GM10248 (cell line): ENCODE measurements at regions of chr2 and their contacts with region 1.

Region 1: GRCh38 chr2:26745609-26746327 is 18.3 kb upstream of the SLC35F6 start:
- DNase-seq: peak; percentile 79
- CTCF ChIP-seq: peak; percentile 95

Region 2: DNA sequence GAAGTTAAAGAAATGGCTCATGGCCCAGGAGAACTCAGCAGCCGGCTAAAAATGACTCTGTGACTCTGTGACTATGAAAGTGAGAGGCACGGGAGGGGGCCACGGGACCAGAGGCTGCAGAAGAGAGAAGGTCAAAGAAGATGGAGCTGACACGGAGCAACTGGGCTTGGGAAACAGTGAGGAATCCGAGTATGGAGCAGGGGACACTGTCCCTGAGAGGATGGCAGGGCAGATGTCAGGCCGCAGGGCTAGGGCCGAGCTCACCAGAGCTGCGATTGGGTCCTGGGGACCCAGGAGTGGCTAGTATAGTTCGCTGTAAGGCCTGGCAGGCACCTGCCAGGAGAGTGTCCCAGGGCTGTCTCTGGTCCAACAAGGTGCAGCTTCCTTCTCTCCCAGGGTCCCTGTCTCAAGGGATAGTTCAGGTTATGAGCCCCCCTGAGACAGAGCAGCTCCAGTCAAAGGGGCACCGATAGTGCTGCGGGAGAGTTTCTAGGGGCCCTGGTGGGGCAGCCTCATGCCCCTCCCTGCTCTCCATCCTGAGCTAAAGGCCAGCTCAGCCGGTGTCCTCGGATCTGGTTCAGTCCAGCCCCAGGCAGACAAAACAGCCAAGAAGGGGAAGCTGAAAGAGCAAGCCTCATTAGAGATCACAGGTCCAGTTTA is 147.3 kb before region 1 on chr2:
- CTCF ChIA-PET with region 1: interaction called, 189 read pairs
- POLR2A ChIA-PET with region 1: no interaction called
- DNase-seq: no peak
- CTCF ChIP-seq: no peak

Region 3: DNA sequence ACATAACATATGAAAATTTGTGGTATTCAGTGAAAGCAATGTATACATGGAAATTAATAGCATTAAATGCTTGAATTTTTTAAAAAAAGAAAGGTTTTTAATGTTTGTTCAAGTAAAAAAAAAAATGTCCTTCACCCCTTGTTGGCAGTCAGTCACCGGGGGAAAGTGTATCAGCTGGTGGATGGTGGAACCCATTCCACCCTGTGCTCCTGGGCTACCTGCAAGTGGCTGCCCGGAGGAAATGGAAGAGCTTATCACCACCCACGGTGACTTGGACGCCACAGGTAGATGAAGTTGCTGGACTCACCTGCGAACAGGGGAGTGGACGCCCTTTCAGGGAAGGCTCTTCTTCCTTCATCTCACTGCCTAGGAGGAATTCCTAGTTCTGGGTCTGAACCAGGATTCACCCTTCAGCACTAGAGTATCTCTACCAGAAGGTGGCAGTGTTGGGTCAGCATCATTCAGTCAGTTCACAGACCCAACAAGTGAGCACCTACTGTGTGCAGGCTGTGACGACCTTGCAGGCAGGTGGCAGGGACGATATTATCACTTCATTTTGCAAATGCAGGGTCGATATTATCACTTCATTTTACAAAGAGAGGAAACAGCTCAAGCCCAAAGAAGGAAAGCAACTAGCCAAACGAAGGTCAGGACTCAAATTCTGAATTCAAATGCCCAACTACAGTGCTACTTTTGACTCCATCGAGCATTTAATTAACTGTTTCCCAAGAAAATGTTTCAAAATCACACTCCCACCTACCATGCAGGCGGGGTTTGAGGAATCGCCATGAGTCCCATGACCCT is 140.4 kb before region 1 on chr2:
- CTCF ChIA-PET with region 1: interaction called, 189 read pairs
- POLR2A ChIA-PET with region 1: no interaction called
- DNase-seq: peak; percentile 64
- CTCF ChIP-seq: peak; percentile 74

Region 4: DNA sequence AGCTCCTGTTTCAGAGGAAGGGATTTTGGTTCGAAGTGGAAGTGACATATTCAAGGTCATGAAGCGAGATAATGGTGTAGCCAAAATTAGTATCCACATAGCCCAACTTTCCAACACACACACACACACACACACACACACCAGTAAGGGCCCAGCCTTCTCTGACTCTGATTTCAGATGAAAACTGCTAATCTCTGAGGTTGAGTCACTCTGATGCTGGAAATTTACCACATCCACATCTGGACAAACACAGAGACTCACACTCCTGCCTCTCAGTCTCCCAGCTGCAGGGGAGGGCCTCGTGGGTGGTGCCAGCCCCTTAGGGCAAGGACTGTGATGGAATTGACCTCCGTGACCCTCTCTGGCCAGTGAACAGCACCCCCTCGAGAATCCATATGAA is 10.7 kb before region 1 on chr2:
- CTCF ChIA-PET with region 1: interaction called, 26 read pairs
- POLR2A ChIA-PET with region 1: no interaction called
- DNase-seq: no peak
- CTCF ChIP-seq: no peak

Region 5: GRCh38 chr2:26757873-26758789 is 12.4 kb after region 1 on chr2:
- CTCF ChIA-PET with region 1: interaction called, 42 read pairs
- POLR2A ChIA-PET with region 1: no interaction called
- DNase-seq: no peak
- CTCF ChIP-seq: no peak

Region 6: DNA sequence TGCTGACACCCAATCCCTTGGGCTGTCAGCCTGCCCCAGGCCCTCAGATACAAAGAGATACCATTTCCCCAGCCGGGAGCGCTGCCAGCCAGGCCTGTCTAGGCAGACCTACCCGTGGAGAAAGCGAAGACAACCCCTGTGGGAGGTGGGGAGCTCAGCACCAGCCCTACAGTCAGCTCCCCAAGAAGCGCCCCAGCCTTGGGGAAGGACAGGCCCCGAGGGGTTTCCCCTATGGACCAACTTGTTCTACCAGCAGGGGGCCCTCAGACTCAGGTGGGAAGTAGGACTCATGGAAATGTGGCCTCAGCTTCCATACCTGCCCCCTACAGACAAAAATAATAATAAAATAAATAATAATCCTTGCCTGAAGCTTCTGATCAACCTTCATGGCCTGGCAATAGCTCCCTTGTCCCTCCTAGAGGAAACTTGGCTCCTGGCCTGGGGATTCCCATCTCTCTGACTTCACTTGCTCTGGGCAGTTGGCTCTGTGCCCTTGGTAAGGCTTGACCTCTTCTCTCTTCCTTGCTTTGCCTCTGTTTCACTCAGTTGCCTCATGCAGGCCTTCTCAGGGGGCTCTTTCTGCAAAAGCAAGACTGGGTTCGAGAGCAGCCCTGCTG is 25.3 kb after region 1 on chr2:
- CTCF ChIA-PET with region 1: interaction called, 22 read pairs
- POLR2A ChIA-PET with region 1: no interaction called
- DNase-seq: peak; percentile 40
- CTCF ChIP-seq: peak; percentile 18